Activated CD4-positive, alpha-beta T cell treated with anti-CD3 and anti-CD28 coated beads, Interleukin-2, amount 10 ng/mL, durations not matched to agents 24 days and 14 days (primary cell): ENCODE measurements at regions of chr1 and their contacts with region 1.

Region 1: GRCh38 chr1:52404116-52404986 is at the starts of genes ORC1 and PRPF38A:
- DNase-seq: peak; percentile 99
- H3K4me3 Mint-ChIP-seq: peak within 1 kb of the TSS; percentile 99
- H3K27ac Mint-ChIP-seq: peak within 1 kb of the TSS; percentile 100
- H3K4me1 Mint-ChIP-seq: peaks cover 47% of the 10 kb centered on the region
- H3K27me3 Mint-ChIP-seq: no peaks in the 10 kb centered on the region
- total RNA-seq, gene ORC1: 43.5 and 44.2 TPM in 2 replicates
- total RNA-seq, gene PRPF38A: 106 and 108 TPM in 2 replicates

Region 2: DNA sequence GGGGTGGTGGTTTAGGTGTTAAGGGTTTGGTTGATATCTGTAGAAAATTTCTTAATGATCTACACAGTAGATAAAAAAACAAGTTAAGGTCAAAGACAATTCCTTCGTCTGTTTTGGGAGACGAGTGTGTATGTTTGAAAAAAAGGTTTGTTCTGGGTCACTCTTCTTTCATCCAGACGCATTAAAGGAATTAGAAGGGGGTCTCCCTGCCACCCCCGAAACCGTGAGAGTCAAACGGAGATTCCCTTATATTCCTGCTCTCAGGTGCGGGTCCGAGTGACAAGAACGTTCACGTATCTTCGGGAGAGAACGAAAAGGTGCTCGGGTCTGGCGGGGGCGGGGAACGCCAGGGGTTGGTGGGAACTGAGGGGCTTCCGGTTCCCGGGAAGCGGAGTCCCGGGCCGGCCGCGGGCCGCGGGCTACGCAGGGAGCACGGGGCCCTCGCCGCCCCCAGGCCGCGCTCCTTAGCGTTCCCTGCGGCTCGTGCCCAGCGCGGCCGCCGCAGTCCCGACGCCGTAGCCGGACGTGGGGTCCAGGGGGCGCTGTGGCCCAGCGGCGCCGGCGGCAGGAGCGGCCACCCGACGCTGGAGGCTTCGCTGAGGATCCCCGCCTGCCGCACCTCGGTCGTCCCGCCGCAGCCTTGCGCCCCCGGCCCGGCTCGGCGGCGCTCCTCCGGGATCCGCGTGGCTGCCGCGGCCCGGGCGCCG is 262.7 kb before region 1 on chr1 and contains the start of gene ZFYVE9:
- intact Hi-C with region 1: loop called (anchors 1 kb)
- DNase-seq: peak; percentile 92
- H3K4me3 Mint-ChIP-seq: peak within 1 kb of the TSS; percentile 81
- H3K27ac Mint-ChIP-seq: peak within 1 kb of the TSS; percentile 74
- H3K4me1 Mint-ChIP-seq: peaks cover 22% of the 10 kb centered on the region
- H3K27me3 Mint-ChIP-seq: peaks cover 33% of the 10 kb centered on the region
- total RNA-seq, gene ZFYVE9: 3.9 and 4.3 TPM in 2 replicates

Region 3: GRCh38 chr1:52281518-52281917 is 122.8 kb before region 1 on chr1:
- intact Hi-C with region 1: no loop called
- DNase-seq: no peak
- H3K4me3 Mint-ChIP-seq: no peak overlapping the region
- H3K27ac Mint-ChIP-seq: no peak overlapping the region
- H3K4me1 Mint-ChIP-seq: no peaks in the 10 kb centered on the region
- H3K27me3 Mint-ChIP-seq: no peaks in the 10 kb centered on the region

Region 4: DNA sequence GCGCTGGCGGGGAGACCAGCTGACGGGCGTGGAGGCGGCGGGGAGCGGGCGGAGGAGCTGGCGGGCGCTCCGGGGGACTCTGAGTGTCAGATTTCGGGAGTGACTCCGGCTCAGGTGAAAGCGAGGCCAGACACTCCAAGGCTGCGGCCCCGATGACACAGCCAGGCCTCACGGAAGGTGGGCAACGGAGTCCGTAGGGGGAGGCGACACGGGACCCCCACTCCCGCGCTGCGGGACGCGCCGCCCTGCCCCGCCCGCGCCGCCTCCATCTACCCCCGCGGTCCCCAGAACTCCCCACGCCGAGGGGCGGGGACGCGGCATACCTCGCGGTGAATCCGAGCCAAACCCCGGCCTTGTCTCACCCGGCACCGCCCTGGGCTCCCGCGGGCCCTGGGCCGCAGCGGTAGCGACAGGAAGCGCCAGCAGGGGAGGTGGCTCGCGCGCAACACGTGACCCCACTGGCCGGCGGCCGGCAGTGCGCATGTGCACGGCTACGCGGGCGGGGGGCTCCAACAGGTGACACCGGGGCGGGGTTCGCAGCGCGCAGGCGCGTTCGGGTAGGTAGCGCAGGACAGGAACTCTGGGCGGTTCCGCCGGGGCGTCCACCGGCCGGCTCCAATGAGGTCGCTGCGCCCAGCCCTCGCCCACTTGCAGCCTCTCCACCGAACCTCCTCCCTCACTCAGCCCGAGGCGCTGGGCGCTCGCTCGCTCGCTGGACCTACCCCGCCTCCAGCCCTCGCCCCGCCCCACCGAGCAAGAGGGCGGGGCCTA is 38.4 kb before region 1 on chr1 and contains the start of gene CC2D1B:
- intact Hi-C with region 1: loop called (anchors 1 kb)
- DNase-seq: peak; percentile 100
- H3K4me3 Mint-ChIP-seq: peak within 1 kb of the TSS; percentile 97
- H3K27ac Mint-ChIP-seq: peak within 1 kb of the TSS; percentile 92
- H3K4me1 Mint-ChIP-seq: peaks cover 39% of the 10 kb centered on the region
- H3K27me3 Mint-ChIP-seq: no peaks in the 10 kb centered on the region
- total RNA-seq, gene CC2D1B: 34.8 and 36.7 TPM in 2 replicates

Region 5: GRCh38 chr1:52386458-52386857 is 17.9 kb before region 1 on chr1:
- intact Hi-C with region 1: no loop called
- DNase-seq: no peak
- H3K4me3 Mint-ChIP-seq: no peak overlapping the region
- H3K27ac Mint-ChIP-seq: peak overlapping the region; percentile 34
- H3K4me1 Mint-ChIP-seq: peaks cover 2% of the 10 kb centered on the region
- H3K27me3 Mint-ChIP-seq: no peaks in the 10 kb centered on the region

Region 6: DNA sequence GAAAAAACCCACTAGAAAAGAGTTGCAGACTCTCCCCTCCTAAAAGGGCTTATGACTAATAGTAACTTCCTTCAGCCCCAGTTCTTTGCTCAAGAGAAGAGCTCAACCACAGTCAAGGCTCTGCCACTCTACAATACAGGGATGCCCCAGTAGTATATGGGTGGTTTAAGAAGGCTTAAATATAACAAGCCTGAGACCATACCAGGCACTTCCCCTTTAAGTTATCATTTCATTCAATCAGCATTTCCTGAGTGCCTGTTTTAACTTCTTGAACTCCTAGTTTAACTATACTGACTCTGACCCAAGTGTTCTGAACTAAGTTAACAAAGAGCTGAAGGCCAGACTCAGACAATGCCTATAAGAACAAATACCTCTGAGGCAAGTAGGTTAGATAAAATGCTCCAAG is 19.9 kb after region 1 on chr1:
- intact Hi-C with region 1: loop called (anchors 1 kb)
- DNase-seq: peak; percentile 78
- H3K4me3 Mint-ChIP-seq: peak overlapping the region; percentile 67
- H3K27ac Mint-ChIP-seq: peak overlapping the region; percentile 81
- H3K4me1 Mint-ChIP-seq: peaks cover 39% of the 10 kb centered on the region
- H3K27me3 Mint-ChIP-seq: no peaks in the 10 kb centered on the region

Region 7: GRCh38 chr1:52683367-52683940 is 279.1 kb after region 1 on chr1:
- intact Hi-C with region 1: loop called (anchors 1 kb)
- DNase-seq: peak; percentile 64
- H3K4me3 Mint-ChIP-seq: no peak overlapping the region
- H3K27ac Mint-ChIP-seq: no peak overlapping the region
- H3K4me1 Mint-ChIP-seq: peaks cover 8% of the 10 kb centered on the region
- H3K27me3 Mint-ChIP-seq: no peaks in the 10 kb centered on the region

Region 8: DNA sequence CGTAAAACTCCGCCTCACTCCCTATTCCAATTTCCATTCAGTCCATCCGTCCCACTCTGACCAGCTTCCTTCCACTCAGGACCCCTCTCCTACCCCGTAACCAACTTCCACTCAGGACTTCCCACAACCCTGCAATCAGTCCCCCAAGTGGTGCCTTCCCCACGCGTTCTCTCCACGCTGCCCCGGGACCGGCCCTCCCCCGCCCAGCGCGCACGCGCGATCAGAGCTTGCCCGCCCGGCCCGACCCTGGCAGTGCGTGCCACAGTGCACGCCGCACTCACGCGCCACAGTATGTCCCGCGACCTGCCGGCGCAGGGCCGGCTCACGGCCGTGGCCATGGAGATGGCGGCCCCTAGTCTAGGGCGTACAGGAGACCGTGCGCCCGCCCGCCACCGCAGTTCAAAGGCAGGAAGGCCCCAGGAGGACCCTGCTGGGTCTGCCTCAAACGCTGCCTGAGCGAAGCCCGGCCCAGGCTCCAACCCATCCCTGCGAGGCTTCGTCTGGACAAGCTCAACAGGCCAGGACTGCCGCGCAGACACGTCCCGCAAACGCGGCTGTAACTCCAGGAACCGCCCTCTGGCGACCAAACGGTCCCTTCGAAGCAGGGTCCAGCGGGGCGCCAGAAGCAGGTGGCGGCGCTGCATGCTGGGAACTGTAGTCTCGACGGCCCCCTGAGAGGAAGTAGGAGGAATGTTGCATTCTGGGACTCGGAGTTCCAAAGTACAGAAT is 1433.7 kb after region 1 on chr1 and contains the start of gene NDC1:
- intact Hi-C with region 1: loop called (anchors 5 kb)
- DNase-seq: peak; percentile 96
- H3K4me3 Mint-ChIP-seq: peak within 1 kb of the TSS; percentile 100
- H3K27ac Mint-ChIP-seq: peak within 1 kb of the TSS; percentile 100
- H3K4me1 Mint-ChIP-seq: peaks cover 25% of the 10 kb centered on the region
- H3K27me3 Mint-ChIP-seq: no peaks in the 10 kb centered on the region
- total RNA-seq, gene NDC1: 39.7 and 40.8 TPM in 2 replicates